AG04449 (cell line): ENCODE measurements at regions of chr17 and their contacts with region 1.

Region 1: GRCh38 chr17:46193626-46194392 is 580 bp upstream of the KANSL1 start:
- DNase-seq: peak; percentile 63
- H3K4me3 ChIP-seq: peak overlapping the region; percentile 65
- CTCF ChIP-seq: no peak

Region 2: GRCh38 chr17:46013502-46014165 is 180.2 kb before region 1 on chr17:
- CTCF ChIA-PET with region 1: interaction called, 11 read pairs
- POLR2A ChIA-PET with region 1: no interaction called
- DNase-seq: peak; percentile 10
- H3K4me3 ChIP-seq: no peak overlapping the region
- CTCF ChIP-seq: no peak

Region 3: GRCh38 chr17:46044286-46044928 is 149.4 kb before region 1 on chr17:
- CTCF ChIA-PET with region 1: interaction called, 77 read pairs
- POLR2A ChIA-PET with region 1: interaction called, 3 read pairs
- DNase-seq: peak; percentile 61
- H3K4me3 ChIP-seq: no peak overlapping the region
- CTCF ChIP-seq: peak; percentile 74

Region 4: GRCh38 chr17:46072998-46073397 is 120.8 kb before region 1 on chr17:
- CTCF ChIA-PET with region 1: interaction called, 14 read pairs
- POLR2A ChIA-PET with region 1: no interaction called
- DNase-seq: peak; percentile 44
- H3K4me3 ChIP-seq: no peak overlapping the region
- CTCF ChIP-seq: no peak

Region 5: GRCh38 chr17:46121165-46121764 is 72.5 kb before region 1 on chr17:
- CTCF ChIA-PET with region 1: interaction called, 10 read pairs
- POLR2A ChIA-PET with region 1: no interaction called
- DNase-seq: no peak
- H3K4me3 ChIP-seq: no peak overlapping the region
- CTCF ChIP-seq: no peak

Region 6: GRCh38 chr17:46171939-46172338 is 21.9 kb before region 1 on chr17:
- CTCF ChIA-PET with region 1: interaction called, 88 read pairs
- POLR2A ChIA-PET with region 1: no interaction called
- DNase-seq: no peak
- H3K4me3 ChIP-seq: no peak overlapping the region
- CTCF ChIP-seq: no peak

Region 7: DNA sequence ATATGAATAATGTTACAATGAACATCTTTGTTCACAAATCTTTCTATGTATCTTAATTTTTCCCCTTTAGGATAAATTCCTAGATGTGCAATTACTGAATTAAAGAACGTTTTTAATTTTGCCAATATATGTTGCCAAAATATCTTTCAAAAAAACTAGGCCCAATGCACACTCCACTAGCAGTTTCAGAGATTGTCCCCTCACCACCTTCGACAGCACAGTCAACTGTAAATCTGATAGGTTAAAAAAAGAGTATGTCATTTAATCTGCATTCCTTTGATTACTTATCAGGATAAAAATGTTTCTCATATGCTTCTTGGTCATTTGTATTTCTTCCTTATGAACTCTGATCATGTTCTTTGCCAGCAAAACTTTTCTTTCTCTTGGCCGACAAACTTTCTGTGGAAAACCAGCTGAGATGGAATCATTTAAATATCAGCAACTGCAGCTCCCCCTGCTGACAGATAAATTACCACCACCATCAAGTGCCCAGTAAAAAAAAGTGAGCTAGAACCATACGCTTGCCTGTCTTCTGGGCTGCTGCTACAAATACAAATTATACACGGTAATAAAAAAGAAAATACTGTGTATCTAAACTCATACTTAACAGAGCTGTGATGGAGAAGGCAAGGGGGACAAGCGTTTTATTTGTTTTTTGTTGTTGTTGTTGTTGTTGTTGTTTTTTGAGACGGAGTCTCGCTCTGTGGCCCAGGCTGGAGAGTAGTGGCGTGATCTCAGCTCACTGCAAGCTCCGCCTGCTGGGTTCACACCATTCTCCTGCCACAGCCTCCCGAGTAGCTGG is 19.0 kb after region 1 on chr17:
- CTCF ChIA-PET with region 1: interaction called, 43 read pairs
- POLR2A ChIA-PET with region 1: no interaction called
- DNase-seq: peak; percentile 28
- H3K4me3 ChIP-seq: no peak overlapping the region
- CTCF ChIP-seq: peak; percentile 49

Region 8: DNA sequence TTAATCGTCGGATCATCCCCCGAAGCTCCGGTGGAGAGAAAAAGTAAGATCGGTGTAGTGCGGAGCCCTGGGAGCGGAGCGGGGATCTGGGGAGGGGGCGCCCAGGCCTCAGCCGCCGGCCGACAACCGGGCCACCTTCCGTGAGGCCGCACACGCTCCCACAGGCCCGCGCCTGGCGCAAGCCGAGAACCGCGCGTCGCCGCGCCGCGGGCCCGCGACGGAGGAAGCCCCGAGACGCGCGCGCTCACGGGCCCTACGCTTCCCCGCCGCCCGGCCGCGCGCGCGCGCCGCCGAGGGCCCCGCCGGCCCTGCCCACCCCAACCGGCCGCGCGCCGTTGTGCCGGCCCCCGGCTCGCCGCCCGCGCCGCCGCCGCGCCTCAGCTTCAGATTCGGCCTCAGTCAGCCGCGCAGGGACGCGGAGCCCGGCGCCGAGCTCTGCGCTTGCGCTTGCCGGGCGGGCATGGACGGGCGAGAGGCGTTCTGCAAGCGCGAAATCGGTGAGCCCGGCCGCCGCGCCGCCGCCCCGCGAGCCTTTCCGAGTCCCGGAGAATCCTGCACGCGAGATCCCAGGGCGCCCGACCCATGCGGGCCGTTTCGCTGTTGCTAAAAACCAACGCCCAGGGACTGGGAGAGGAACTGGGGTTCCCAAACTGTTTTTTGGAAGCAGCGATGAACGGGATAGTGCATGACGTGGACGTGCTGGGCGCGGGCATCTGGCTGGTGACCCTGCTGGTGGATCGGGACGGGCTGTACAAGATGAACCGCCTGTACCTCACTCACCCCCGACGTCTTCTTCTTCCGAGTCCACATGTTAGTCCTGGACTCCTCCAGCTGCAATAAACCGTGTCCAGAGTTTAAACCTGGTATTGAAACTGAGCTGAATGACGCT is 73.1 kb after region 1 on chr17:
- CTCF ChIA-PET with region 1: no interaction called
- POLR2A ChIA-PET with region 1: no interaction called
- DNase-seq: no peak
- H3K4me3 ChIP-seq: peak overlapping the region; percentile 74
- CTCF ChIP-seq: no peak

Region 9: GRCh38 chr17:46889992-46890564 is 696.3 kb after region 1 on chr17:
- CTCF ChIA-PET with region 1: no interaction called
- POLR2A ChIA-PET with region 1: no interaction called
- DNase-seq: no peak
- H3K4me3 ChIP-seq: no peak overlapping the region
- CTCF ChIP-seq: no peak